MCF 10A (cell line): ENCODE measurements at regions of chr6 and their contacts with region 1.

Region 1: DNA sequence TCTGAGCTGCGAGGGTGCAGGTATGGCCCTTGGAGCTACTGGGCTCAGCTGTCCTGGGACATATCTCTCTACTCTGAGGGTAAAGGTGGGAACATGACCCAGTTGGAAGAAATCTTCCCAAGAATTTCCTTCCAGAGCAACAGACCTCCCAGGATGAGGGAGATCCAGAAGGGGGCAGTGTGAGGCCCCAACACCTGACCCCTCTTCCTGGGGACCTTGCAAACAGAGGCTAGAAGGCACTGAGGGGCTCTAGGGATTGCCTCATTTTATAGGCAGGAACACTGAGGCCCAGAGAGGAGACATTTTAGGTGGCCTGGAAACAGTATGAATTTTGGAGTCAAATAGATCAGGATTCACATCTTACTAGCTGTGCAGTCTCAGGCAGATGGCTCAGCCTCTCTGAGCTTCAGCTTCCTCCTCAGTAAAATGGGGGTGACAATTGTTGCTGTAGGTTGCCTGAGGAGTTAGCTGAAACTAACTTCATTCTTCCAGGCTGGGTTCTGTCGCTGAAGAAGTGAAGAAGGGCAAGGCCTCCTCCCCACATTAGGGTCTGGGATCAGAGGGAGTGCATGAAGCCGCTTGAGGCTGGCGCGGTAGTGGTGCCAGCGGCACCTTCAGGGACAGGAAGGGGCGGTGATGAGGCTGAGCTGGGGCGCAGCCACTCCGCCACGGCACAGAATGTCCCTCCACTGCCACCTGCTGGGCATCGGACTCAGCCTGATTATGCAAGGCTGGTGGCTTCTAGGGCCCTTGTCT is 11.4 kb downstream of the KCNK17 start:
- DNase-seq: peak; percentile 82
- H3K4me3 Mint-ChIP-seq: no peak overlapping the region
- H3K27ac Mint-ChIP-seq: no peak overlapping the region
- H3K4me1 Mint-ChIP-seq: no peaks in the 10 kb centered on the region
- H3K27me3 Mint-ChIP-seq: no peaks in the 10 kb centered on the region
- CTCF ChIP-seq: peak; percentile 94

Region 2: DNA sequence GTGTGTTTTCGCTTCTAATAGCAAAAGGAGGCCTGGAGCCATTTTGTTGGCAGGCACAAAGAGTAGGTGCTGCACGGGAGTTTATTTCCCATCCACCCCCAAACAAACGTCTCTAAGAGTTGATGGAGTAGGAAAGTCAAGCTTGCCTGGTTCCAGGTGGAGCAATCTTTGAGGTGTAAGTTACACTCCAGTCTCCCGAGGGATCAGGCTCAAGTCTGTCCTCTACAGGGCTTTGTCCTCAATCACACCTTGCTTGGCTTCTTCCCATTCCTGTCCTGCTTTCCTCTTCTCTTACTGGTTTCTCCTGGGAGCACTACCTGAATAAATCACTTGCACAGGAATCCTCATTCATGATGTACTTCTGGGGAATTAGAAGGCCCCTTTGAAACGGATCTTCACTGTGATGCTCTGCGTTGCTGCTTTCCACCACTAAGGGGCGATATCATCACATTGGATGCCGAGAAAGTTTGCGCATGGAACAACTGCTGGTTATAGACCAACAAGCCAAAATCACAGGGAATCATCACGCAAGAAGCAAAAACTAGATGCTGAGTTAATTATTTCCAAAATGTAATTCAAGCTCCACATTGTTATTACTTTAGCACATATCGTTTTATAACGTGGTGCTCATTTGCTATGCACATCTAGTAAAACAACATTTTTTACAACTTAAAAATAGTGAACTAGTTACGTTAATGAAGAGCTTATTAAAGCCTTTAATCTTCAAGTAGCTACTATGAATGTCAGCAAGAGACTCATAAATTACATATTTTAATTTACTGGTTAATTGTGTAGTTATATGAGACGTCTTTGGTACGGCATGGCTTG is 430.9 kb before region 1 on chr6:
- CTCF ChIA-PET with region 1: interaction called, 46 read pairs
- POLR2A ChIA-PET with region 1: no interaction called
- intact Hi-C with region 1: no loop called
- DNase-seq: peak; percentile 66
- H3K4me3 Mint-ChIP-seq: no peak overlapping the region
- H3K27ac Mint-ChIP-seq: no peak overlapping the region
- H3K4me1 Mint-ChIP-seq: peaks cover 6% of the 10 kb centered on the region
- H3K27me3 Mint-ChIP-seq: no peaks in the 10 kb centered on the region
- CTCF ChIP-seq: peak; percentile 77

Region 3: GRCh38 chr6:39182604-39183003 is 120.2 kb before region 1 on chr6:
- CTCF ChIA-PET with region 1: interaction called, 56 read pairs
- POLR2A ChIA-PET with region 1: no interaction called
- intact Hi-C with region 1: no loop called
- DNase-seq: no peak
- H3K4me3 Mint-ChIP-seq: no peak overlapping the region
- H3K27ac Mint-ChIP-seq: no peak overlapping the region
- H3K4me1 Mint-ChIP-seq: peaks cover 40% of the 10 kb centered on the region
- H3K27me3 Mint-ChIP-seq: no peaks in the 10 kb centered on the region
- CTCF ChIP-seq: no peak

Region 4: DNA sequence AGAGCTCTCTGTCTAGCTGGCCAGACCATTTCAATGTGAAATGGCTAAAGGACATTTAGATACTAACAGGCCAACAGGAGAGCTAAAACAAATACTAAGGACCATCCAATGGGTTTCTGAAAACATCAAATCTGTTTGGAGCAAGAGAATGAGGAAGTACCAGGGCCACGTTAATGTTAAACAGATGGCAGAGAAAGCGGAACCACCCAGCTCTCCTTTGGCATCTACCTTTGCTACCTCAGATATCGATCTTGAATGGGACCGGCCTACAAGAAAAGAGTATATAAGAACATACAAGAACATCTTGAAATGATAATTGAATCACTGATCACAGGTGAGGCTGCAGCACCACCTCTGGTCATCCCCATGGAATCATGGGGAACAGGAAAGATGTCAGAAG is 105.3 kb before region 1 on chr6:
- CTCF ChIA-PET with region 1: interaction called, 23 read pairs
- POLR2A ChIA-PET with region 1: no interaction called
- intact Hi-C with region 1: no loop called
- DNase-seq: no peak
- H3K4me3 Mint-ChIP-seq: no peak overlapping the region
- H3K27ac Mint-ChIP-seq: no peak overlapping the region
- H3K4me1 Mint-ChIP-seq: peaks cover 10% of the 10 kb centered on the region
- H3K27me3 Mint-ChIP-seq: no peaks in the 10 kb centered on the region
- CTCF ChIP-seq: no peak

Region 5: DNA sequence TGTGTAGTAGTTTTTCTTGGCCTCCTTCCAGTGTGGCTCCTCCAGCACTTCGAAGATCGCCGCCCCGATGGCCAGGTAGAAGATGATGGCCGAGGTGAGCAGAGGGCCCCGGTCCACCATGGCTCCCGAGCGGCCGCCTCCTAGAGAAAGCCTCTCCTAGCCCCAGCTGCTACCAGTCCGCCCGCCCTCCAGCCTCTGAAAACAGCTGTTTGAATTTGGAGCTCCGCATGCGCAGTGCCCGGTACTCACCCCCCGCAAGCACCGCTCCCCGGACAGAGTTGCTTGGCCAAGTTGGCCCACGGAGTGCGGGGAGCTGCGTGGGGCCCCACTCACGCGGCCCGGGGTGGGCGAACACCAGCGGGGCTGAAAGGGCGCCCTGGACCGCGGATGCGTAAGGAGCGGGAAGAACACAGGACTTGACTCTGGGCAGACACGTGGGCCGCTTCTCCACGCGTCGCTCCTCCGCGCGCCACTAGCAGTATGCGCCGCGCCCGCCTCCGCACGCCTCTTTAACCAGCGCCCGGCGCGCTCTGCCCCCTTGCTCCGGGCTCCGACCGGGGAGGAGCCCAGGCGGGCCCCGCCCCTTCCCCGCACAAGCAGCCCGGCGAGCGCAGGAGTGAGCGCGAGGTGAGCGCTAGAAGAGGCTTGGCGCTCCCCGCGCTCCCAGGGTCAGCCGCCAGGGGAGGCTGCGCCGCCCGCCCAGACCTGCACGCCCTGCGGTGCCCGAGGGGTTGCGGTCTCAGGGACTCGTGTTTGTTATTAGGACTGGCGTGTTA is 73.7 kb before region 1 on chr6 and contains the start of gene KCNK5:
- CTCF ChIA-PET with region 1: interaction called, 5 read pairs
- POLR2A ChIA-PET with region 1: no interaction called
- intact Hi-C with region 1: loop called (anchors 2 kb)
- DNase-seq: peak; percentile 89
- H3K4me3 Mint-ChIP-seq: peak within 1 kb of the TSS; percentile 75
- H3K27ac Mint-ChIP-seq: no peak within 1 kb of the TSS
- H3K4me1 Mint-ChIP-seq: peaks cover 23% of the 10 kb centered on the region
- H3K27me3 Mint-ChIP-seq: no peaks in the 10 kb centered on the region
- CTCF ChIP-seq: peak; percentile 51
- total RNA-seq, gene KCNK5: 1.3 and 2.6 TPM in 2 replicates

Region 6: GRCh38 chr6:39263303-39264037 is 39.4 kb before region 1 on chr6:
- CTCF ChIA-PET with region 1: interaction called, 18 read pairs
- POLR2A ChIA-PET with region 1: no interaction called
- intact Hi-C with region 1: no loop called
- DNase-seq: no peak
- H3K4me3 Mint-ChIP-seq: no peak overlapping the region
- H3K27ac Mint-ChIP-seq: no peak overlapping the region
- H3K4me1 Mint-ChIP-seq: no peaks in the 10 kb centered on the region
- H3K27me3 Mint-ChIP-seq: peaks cover 11% of the 10 kb centered on the region
- CTCF ChIP-seq: no peak